IMR-90 (cell line): ENCODE measurements at regions of chr1 and their contacts with region 1.

Region 1: GRCh38 chr1:89632657-89633247 is at the start of gene LRRC8C:
- DNase-seq: peak; percentile 71
- ATAC-seq: peak; percentile 91
- H3K4me3 ChIP-seq: peak within 1 kb of the TSS; percentile 96
- H3K27ac ChIP-seq: peak within 1 kb of the TSS; percentile 91
- H3K4me1 ChIP-seq: peaks cover 12% of the 10 kb centered on the region
- H3K27me3 ChIP-seq: no peaks in the 10 kb centered on the region
- CTCF ChIP-seq: peak; percentile 81
- POLR2A ChIP-seq: peak; percentile 59
- RAD21 ChIP-seq: peak; percentile 72
- total RNA-seq, gene LRRC8C: 12.9 and 15.3 TPM in 2 replicates

Region 2: DNA sequence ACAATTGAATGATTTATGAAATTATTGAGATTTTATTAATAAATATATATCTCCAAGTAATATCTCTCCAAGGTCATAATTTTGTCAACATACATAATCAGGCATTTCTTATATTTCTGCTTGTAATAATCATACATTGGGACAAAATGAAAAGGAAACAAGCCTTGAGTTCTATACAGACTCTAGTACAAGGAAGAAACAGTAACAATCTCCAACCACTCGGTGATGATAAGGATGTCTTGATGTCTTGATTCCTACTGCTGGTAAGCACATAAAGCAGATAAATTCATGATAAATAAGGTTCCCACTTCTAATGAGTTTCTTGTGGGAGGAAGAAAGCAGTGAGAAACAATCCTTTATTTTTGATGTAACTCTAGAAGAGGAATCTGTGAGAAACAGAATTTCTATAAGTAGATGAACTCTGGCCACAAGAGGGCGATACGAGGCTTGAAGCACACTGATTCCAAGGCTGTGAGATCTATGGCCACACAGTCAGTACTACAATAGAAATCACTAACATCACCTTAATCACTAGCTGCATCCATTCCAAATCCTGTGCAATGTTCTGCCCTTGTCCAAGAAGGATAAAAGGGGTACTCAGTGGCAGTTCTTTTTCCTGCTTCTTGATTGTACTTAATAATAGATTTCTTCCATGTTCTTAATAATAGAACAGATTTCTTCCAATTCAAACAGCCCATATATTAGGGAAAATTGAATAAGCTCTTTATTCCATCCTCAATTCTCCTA is 149.6 kb before region 1 on chr1:
- CTCF ChIA-PET with region 1: no interaction called
- POLR2A ChIA-PET with region 1: no interaction called
- dilution Hi-C with region 1: no loop called
- in situ Hi-C with region 1: no loop called
- intact Hi-C with region 1: loop called (anchors 2 kb)
- DNase-seq: peak; percentile 81
- ATAC-seq: peak; percentile 89
- H3K4me3 ChIP-seq: no peak overlapping the region
- H3K27ac ChIP-seq: no peak overlapping the region
- H3K4me1 ChIP-seq: no peaks in the 10 kb centered on the region
- H3K27me3 ChIP-seq: peaks cover 6% of the 10 kb centered on the region
- CTCF ChIP-seq: peak; percentile 71
- POLR2A ChIP-seq: no peak
- RAD21 ChIP-seq: peak; percentile 78

Region 3: GRCh38 chr1:89649783-89650182 is 17.0 kb after region 1 on chr1:
- CTCF ChIA-PET with region 1: interaction called, 4 read pairs
- POLR2A ChIA-PET with region 1: no interaction called
- dilution Hi-C with region 1: no loop called
- in situ Hi-C with region 1: no loop called
- intact Hi-C with region 1: loop called (anchors 2 kb)
- DNase-seq: no peak
- ATAC-seq: no peak; the same call in 1 of the 2 replicates
- H3K4me3 ChIP-seq: no peak overlapping the region
- H3K27ac ChIP-seq: no peak overlapping the region
- H3K4me1 ChIP-seq: no peaks in the 10 kb centered on the region; the same call in 1 of the 2 replicates
- H3K27me3 ChIP-seq: no peaks in the 10 kb centered on the region
- CTCF ChIP-seq: no peak
- POLR2A ChIP-seq: no peak
- RAD21 ChIP-seq: no peak

Region 4: GRCh38 chr1:89757532-89757931 is 124.8 kb after region 1 on chr1:
- CTCF ChIA-PET with region 1: interaction called, 35 read pairs
- POLR2A ChIA-PET with region 1: interaction called, 4 read pairs
- dilution Hi-C with region 1: no loop called
- in situ Hi-C with region 1: loop called (anchors 5 kb)
- intact Hi-C with region 1: no loop called
- DNase-seq: peak; percentile 27
- ATAC-seq: peak; percentile 72
- H3K4me3 ChIP-seq: no peak overlapping the region
- H3K27ac ChIP-seq: no peak overlapping the region
- H3K4me1 ChIP-seq: peaks cover 11% of the 10 kb centered on the region
- H3K27me3 ChIP-seq: no peaks in the 10 kb centered on the region
- CTCF ChIP-seq: no peak
- POLR2A ChIP-seq: no peak
- RAD21 ChIP-seq: no peak

Region 5: DNA sequence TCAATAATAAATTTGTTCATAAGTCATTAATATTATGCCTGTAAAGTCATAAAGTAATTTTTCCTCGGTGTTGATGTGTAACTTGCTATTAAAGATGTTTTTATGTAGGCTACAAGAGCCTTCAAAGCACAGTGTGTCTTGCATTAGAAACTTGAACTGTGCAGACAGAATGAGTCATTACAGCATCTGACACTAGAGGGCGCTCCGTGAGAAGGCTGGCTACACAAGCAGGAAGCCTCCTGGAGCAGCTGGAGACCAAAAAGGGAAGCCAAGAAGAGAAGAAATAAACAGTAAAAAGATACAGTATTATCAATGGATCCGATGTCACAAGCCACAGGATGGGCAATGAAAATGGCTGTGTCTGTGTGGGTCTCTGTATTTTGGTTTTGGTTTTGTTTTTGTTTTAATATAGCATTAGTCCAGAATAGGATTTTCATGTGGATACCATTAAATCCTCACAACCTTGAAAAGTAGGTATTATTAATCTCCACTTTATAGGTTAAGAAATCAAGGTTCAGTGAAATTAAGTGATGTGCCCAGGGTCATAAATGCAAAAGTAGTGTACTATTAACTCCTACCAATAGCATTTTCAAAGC is 172.0 kb after region 1 on chr1:
- CTCF ChIA-PET with region 1: no interaction called
- POLR2A ChIA-PET with region 1: no interaction called
- dilution Hi-C with region 1: no loop called
- in situ Hi-C with region 1: no loop called
- intact Hi-C with region 1: no loop called
- DNase-seq: peak; percentile 87
- ATAC-seq: peak; percentile 92
- H3K4me3 ChIP-seq: no peak overlapping the region
- H3K27ac ChIP-seq: no peak overlapping the region
- H3K4me1 ChIP-seq: peaks cover 9% of the 10 kb centered on the region
- H3K27me3 ChIP-seq: no peaks in the 10 kb centered on the region
- CTCF ChIP-seq: peak; percentile 96
- POLR2A ChIP-seq: 0 out of 2 replicates have a peak, but pooled peaks have one; percentile 36
- RAD21 ChIP-seq: peak; percentile 97

Region 6: DNA sequence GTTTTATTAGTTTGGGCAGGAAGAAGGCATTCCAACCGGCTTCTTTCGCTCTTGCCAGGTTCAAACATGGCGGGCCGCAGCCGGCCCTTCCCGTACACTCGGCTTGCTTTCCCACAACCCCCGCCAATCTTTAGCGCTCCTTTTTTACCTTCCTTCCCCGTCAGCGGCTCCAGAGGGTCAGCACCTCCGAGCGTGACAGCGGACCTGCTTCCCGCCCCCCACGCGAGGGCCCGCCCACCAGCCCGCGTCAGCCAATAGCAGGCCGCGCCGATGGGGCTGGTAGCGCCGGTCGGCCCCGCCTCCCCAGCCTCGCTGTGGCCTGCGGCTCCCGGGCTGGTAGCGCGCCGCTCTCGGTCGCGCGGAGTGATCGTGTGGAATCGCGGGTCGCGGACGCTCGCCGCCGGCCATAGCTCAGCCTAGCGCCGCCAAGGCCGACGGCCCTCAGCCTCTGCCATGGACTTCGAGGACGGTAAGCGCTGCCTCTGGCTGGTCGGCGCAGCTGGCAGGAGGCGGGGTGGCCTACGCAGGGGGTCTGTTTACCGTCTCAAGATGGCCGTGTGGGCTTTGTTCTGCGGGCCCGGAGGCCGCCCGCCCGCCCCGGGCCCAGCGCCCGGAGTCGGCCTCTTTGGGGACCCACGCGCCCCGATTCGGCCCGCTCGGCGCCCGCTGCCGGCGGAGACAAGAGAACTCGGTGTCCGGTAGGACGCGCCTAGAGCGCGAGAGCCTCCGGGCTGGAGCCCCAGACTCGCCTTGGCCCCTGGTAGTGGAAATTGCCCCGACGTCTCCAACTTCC is 362.2 kb after region 1 on chr1 and contains the start of gene ZNF326:
- CTCF ChIA-PET with region 1: no interaction called
- POLR2A ChIA-PET with region 1: no interaction called
- dilution Hi-C with region 1: no loop called
- in situ Hi-C with region 1: loop called (anchors 10 kb)
- intact Hi-C with region 1: loop called (anchors 5 kb)
- DNase-seq: peak; percentile 97
- ATAC-seq: peak; percentile 96
- H3K4me3 ChIP-seq: peak within 1 kb of the TSS; percentile 89
- H3K27ac ChIP-seq: peak within 1 kb of the TSS; percentile 95
- H3K4me1 ChIP-seq: no peaks in the 10 kb centered on the region; the same call in 1 of the 2 replicates
- H3K27me3 ChIP-seq: no peaks in the 10 kb centered on the region
- CTCF ChIP-seq: no peak
- POLR2A ChIP-seq: peak; percentile 98
- RAD21 ChIP-seq: no peak
- total RNA-seq, gene ZNF326: 4.5 and 10.0 TPM in 2 replicates